ENCODE measurements at regions of chr17 and their contacts with region 1.

Region 1: GRCh38 chr17:49191917-49192741 is 18.2 kb downstream of the GNGT2 start:
- DNase-seq: peak; percentile 91
- ATAC-seq: peak; percentile 93

Region 2: DNA sequence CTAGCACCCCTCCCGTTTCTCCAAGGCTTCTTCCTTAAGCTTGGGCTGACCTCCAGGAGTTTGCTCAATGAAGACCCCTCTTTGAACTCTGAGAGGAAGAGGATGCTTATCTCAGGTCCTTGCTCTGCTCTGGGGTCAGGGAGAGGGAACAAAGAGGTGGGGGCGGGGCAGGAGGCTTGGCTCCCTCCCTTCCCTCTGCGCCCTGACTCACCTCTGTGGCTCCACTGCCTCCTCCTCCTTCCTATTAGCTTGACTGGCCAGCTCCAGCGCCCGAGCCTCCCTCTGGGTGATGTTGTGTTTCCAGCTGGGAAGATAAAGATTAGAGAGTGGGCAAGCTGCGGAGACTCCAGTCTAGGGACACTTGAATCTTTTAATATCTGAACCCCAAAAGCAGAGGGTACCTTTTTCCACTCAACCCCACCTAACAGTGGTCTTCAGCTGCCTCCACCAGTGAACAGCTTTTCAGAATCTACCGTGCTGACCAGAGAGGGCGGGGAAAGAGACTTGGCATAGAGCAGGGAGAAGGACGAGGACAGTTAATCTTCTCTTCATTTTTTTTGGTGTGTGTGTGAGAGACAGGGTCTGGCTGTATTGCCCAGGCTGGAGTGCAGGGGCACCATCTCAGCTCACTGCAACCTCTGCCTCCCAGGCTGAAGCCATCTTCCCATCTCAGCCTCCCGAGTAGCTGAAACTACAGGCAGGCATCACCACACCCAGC is 230.5 kb before region 1 on chr17:
- intact Hi-C with region 1: no loop called
- DNase-seq: no peak
- ATAC-seq: no peak

Region 3: GRCh38 chr17:49117587-49118230 is 74.4 kb before region 1 on chr17:
- intact Hi-C with region 1: no loop called
- DNase-seq: no peak
- ATAC-seq: no peak

Region 4: GRCh38 chr17:49217651-49218413 is 25.7 kb after region 1 on chr17:
- intact Hi-C with region 1: loop called (anchors 2 kb)
- DNase-seq: peak; percentile 87
- ATAC-seq: peak; percentile 66